K562 (cell line): ENCODE measurements at regions of chr5 and their contacts with region 1.

Region 1: GRCh38 chr5:168047043-168047668 is 244.3 kb upstream of the WWC1 start:
- DNase-seq: peak in 2 of 4 experiments; percentile 8 to 17
- ATAC-seq: no peak
- H3K4me3 ChIP-seq: no peak overlapping the region
- H3K27ac ChIP-seq: no peak overlapping the region
- H3K4me1 ChIP-seq: no peaks in the 10 kb centered on the region
- H3K27me3 ChIP-seq: no peaks in the 10 kb centered on the region
- CTCF ChIP-seq: peak; percentile 21 to 41 (median 30); a peak in 3 of 6 replicates
- EP300 ChIP-seq: no peak
- POLR2A ChIP-seq: no peak
- RAD21 ChIP-seq: peak in 1 of 2 experiments; percentile 36; a peak in 2 of 4 replicates

Region 2: DNA sequence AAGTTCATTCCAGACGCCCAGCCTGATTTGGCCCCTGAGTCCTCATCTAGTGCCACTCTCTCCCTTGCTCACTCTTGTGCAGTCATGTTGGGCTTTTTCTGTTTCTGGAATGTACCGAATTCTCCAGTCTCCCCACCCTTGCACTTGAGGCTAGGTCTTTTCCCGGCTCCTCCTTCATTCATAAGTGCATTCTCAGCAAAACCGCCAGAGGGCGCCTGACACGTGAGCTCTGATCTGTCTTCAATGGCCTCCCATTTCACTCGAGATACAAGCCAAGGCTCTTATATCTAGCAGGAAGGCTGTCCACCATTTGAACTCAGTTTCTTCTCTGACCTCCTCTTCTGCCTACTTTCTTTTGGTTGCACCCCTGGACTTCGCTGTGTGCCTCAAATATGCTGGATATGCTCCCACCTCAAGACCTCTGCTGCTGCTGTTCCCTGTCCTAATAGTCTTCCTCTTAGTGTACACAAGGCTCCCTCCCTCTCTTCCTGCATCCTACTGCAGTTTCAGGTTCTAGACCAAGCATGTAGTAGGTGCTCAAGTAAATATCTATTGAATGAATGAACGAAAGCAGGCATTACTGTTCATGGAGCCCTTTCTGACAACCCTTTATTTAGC is 323.8 kb before region 1 on chr5:
- CTCF ChIA-PET with region 1: no interaction called
- POLR2A ChIA-PET with region 1: no interaction called
- in situ Hi-C with region 1: no loop called
- intact Hi-C with region 1: loop called (anchors 10 kb)
- DNase-seq: peak; percentile 56 to 76 (median 64)
- ATAC-seq: peak; percentile 88
- H3K4me3 ChIP-seq: no peak overlapping the region
- H3K27ac ChIP-seq: no peak overlapping the region
- H3K4me1 ChIP-seq: no peaks in the 10 kb centered on the region
- H3K27me3 ChIP-seq: no peaks in the 10 kb centered on the region
- CTCF ChIP-seq: peak; percentile 58 to 75 (median 63)
- EP300 ChIP-seq: no peak
- POLR2A ChIP-seq: no peak
- RAD21 ChIP-seq: peak; percentile 32 to 51; a peak in 3 of 4 replicates

Region 3: GRCh38 chr5:167743685-167744464 is 303.3 kb before region 1 on chr5:
- CTCF ChIA-PET with region 1: no interaction called
- POLR2A ChIA-PET with region 1: no interaction called
- in situ Hi-C with region 1: no loop called
- intact Hi-C with region 1: no loop called
- DNase-seq: no peak
- ATAC-seq: no peak
- H3K4me3 ChIP-seq: no peak overlapping the region
- H3K27ac ChIP-seq: no peak overlapping the region
- H3K4me1 ChIP-seq: no peaks in the 10 kb centered on the region
- H3K27me3 ChIP-seq: no peaks in the 10 kb centered on the region
- CTCF ChIP-seq: no peak
- EP300 ChIP-seq: no peak
- POLR2A ChIP-seq: no peak
- RAD21 ChIP-seq: no peak

Region 4: GRCh38 chr5:167861129-167861927 is 185.8 kb before region 1 on chr5:
- CTCF ChIA-PET with region 1: no interaction called
- POLR2A ChIA-PET with region 1: no interaction called
- in situ Hi-C with region 1: no loop called
- intact Hi-C with region 1: no loop called
- DNase-seq: no peak
- ATAC-seq: no peak
- H3K4me3 ChIP-seq: no peak overlapping the region
- H3K27ac ChIP-seq: no peak overlapping the region
- H3K4me1 ChIP-seq: no peaks in the 10 kb centered on the region
- H3K27me3 ChIP-seq: no peaks in the 10 kb centered on the region
- CTCF ChIP-seq: no peak
- EP300 ChIP-seq: no peak
- POLR2A ChIP-seq: no peak
- RAD21 ChIP-seq: no peak